CD4-positive, alpha-beta memory T cell (primary cell): ENCODE measurements at regions of chr17 and their contacts with region 1.

Region 1: DNA sequence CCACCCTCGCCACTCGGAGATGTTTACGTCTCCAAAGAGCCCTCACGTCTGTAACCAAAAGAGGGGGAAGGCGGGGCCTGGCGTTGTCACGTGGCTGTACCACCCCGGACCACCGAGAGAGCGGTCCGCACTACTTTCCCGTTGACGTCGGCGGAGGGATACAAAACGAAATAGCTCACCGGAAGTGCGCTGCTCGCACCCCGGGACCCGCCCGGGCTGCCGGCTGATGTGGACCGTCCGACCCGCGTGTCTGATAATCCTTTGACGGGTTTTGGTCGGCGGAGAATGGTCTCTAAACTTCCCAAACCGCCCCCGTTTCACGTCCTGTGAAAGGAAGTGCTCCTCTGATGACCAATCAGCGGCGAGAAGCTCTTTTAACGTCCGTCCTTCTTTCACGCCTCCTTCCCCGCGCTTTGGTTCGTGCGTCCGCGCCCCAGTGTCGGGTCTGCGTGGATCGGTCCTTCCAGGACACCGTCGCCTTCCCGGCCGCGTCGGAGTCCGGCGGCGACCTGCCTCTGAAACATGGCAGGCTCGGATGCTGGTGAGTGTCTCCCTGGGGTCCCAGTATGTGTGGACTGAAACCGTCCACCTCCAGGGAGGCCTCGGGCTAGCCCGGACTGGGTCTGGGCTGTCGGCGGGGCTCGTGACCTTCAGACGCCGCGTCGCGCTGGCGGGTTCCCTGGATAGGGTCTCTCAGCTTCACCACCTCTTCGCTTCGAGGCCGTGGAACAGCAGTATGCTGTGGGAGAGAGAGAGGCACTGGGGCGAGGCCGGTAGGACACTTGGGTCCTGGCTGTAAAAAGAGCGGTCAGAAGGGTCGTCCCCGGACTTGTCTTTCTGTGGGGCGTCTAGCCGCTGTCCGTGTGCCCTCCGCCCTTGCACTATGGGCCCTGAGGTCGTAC is at the start of gene CEP95:
- DNase-seq: peak in 3 of 5 donors; percentile 92 to 98 (median 97)
- H3K4me3 ChIP-seq: peak within 1 kb of the TSS; percentile 89 to 97
- H3K4me3 Mint-ChIP-seq: peak within 1 kb of the TSS; percentile 95 to 100 (median 100)
- H3K27ac ChIP-seq: peak within 1 kb of the TSS; percentile 98
- H3K27ac Mint-ChIP-seq: peak within 1 kb of the TSS; percentile 98 to 100 (median 100)
- H3K4me1 ChIP-seq: peaks cover 49% of the 10 kb centered on the region
- H3K4me1 Mint-ChIP-seq: peaks cover 43 to 75% (median 56%) of the 10 kb centered on the region in 4 donors
- H3K27me3 ChIP-seq: no peaks in the 10 kb centered on the region
- H3K27me3 Mint-ChIP-seq: peaks cover 0 to 4% of the 10 kb centered on the region in 2 donors
- total RNA-seq, gene CEP95: 105 to 108 TPM

Region 2: GRCh38 chr17:64020056-64020766 is 486.6 kb before region 1 on chr17 and contains the start of gene ICAM2:
- CTCF ChIA-PET with region 1: no interaction called
- POLR2A ChIA-PET with region 1: interaction called, 16 read pairs
- intact Hi-C with region 1: no loop called
- DNase-seq: peak; percentile 94 to 99 (median 97)
- H3K4me3 ChIP-seq: peak within 1 kb of the TSS; percentile 93 to 96
- H3K4me3 Mint-ChIP-seq: peak within 1 kb of the TSS; percentile 97 to 100 (median 99)
- H3K27ac ChIP-seq: peak within 1 kb of the TSS; percentile 93
- H3K27ac Mint-ChIP-seq: peak within 1 kb of the TSS; percentile 99 to 100 (median 100)
- H3K4me1 ChIP-seq: peaks cover 71% of the 10 kb centered on the region
- H3K4me1 Mint-ChIP-seq: peaks cover 51 to 85% (median 63%) of the 10 kb centered on the region in 4 donors
- H3K27me3 ChIP-seq: no peaks in the 10 kb centered on the region
- H3K27me3 Mint-ChIP-seq: peaks cover 0 to 1% of the 10 kb centered on the region in 2 donors
- total RNA-seq, gene ICAM2: 150 to 158 TPM

Region 3: GRCh38 chr17:64441772-64442540 is 64.9 kb before region 1 on chr17:
- CTCF ChIA-PET with region 1: no interaction called
- POLR2A ChIA-PET with region 1: interaction called, 27 read pairs
- intact Hi-C with region 1: no loop called
- DNase-seq: peak; percentile 31 to 66 (median 39)
- H3K4me3 ChIP-seq: peak overlapping the region in 1 of 2 donors; percentile 39
- H3K4me3 Mint-ChIP-seq: peak overlapping the region; percentile 72 to 92 (median 84)
- H3K27ac ChIP-seq: peak overlapping the region; percentile 28
- H3K27ac Mint-ChIP-seq: peak overlapping the region; percentile 76 to 95 (median 92)
- H3K4me1 ChIP-seq: peaks cover 26% of the 10 kb centered on the region
- H3K4me1 Mint-ChIP-seq: peaks cover 13 to 34% (median 26%) of the 10 kb centered on the region in 4 donors
- H3K27me3 ChIP-seq: no peaks in the 10 kb centered on the region
- H3K27me3 Mint-ChIP-seq: no peaks in the 10 kb centered on the region

Region 4: GRCh38 chr17:64491034-64491859 is 15.6 kb before region 1 on chr17:
- CTCF ChIA-PET with region 1: interaction called, 62 read pairs
- POLR2A ChIA-PET with region 1: interaction called, 330 read pairs
- intact Hi-C with region 1: loop called (anchors 2 kb)
- DNase-seq: peak; percentile 40 to 58 (median 49)
- H3K4me3 ChIP-seq: no peak overlapping the region
- H3K4me3 Mint-ChIP-seq: no peak overlapping the region
- H3K27ac ChIP-seq: no peak overlapping the region
- H3K27ac Mint-ChIP-seq: peak overlapping the region in 3 of 7 donors; percentile 12 to 57 (median 18)
- H3K4me1 ChIP-seq: peaks cover 35% of the 10 kb centered on the region
- H3K4me1 Mint-ChIP-seq: peaks cover 21 to 42% (median 23%) of the 10 kb centered on the region in 4 donors
- H3K27me3 ChIP-seq: no peaks in the 10 kb centered on the region
- H3K27me3 Mint-ChIP-seq: no peaks in the 10 kb centered on the region

Region 5: DNA sequence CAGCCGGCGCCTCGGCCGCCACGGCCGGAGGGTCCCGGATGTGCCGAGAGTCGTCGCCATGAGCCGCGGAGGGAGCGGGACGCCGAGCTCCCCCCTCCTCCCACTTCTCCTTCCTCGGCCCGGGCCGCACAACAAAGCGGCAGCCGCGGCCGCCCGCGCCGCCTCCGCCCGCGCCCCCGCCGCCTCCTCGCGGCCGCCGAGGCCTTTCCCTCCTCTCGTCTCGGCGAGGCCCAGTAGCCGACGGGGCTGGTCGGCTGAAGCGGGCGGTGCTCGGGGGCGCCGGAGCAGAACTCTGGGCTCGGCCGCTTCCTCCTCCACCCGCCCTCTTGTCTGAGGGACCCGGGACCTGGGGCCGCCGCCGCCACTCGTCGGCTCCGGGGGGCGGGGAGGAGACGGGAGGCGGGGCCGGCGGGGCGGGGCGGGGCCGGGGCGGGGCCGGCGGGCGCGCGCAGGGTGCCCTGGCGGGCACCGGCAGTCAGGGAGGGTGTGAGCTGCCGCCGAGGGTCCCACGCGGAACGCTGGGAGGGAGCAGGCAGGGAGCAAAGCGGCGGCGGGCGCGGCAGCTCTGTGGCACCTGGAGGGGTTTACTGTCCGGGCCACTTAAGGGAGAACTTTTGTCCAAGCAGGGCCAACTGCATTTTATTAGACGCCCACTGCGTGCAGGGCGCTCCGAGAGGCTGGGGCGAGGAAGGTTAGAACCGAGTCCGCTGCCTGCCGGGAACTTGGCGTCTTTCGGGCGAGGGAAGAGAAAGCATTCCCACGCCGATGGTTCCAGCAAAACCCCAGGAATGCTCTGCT is 155.3 kb after region 1 on chr17 and contains the start of gene SMURF2:
- CTCF ChIA-PET with region 1: no interaction called
- POLR2A ChIA-PET with region 1: interaction called, 50 read pairs
- intact Hi-C with region 1: loop called (anchors 1 kb)
- DNase-seq: peak; percentile 81 to 85 (median 83)
- H3K4me3 ChIP-seq: peak within 1 kb of the TSS; percentile 61 to 82
- H3K4me3 Mint-ChIP-seq: peak within 1 kb of the TSS; percentile 97 to 99 (median 99)
- H3K27ac ChIP-seq: peak within 1 kb of the TSS; percentile 54
- H3K27ac Mint-ChIP-seq: peak within 1 kb of the TSS; percentile 95 to 98 (median 97)
- H3K4me1 ChIP-seq: peaks cover 39% of the 10 kb centered on the region
- H3K4me1 Mint-ChIP-seq: peaks cover 21 to 40% (median 31%) of the 10 kb centered on the region in 4 donors
- H3K27me3 ChIP-seq: no peaks in the 10 kb centered on the region
- H3K27me3 Mint-ChIP-seq: no peaks in the 10 kb centered on the region
- total RNA-seq, gene SMURF2: 32.8 to 35.0 TPM